ENCODE measurements at regions of chr5 and their contacts with region 1.

Region 1: GRCh38 chr5:169583424-169584204 is at the start of gene SPDL1:
- DNase-seq: peak; percentile 97
- ATAC-seq: peak; percentile 91
- H3K4me3 Mint-ChIP-seq: peak within 1 kb of the TSS; percentile 94
- H3K27ac Mint-ChIP-seq: peak within 1 kb of the TSS; percentile 96
- H3K4me1 Mint-ChIP-seq: peaks cover 25% of the 10 kb centered on the region
- H3K27me3 Mint-ChIP-seq: no peaks in the 10 kb centered on the region
- CTCF ChIP-seq: no peak
- total RNA-seq, gene SPDL1: 40.1 to 40.2 TPM

Region 2: DNA sequence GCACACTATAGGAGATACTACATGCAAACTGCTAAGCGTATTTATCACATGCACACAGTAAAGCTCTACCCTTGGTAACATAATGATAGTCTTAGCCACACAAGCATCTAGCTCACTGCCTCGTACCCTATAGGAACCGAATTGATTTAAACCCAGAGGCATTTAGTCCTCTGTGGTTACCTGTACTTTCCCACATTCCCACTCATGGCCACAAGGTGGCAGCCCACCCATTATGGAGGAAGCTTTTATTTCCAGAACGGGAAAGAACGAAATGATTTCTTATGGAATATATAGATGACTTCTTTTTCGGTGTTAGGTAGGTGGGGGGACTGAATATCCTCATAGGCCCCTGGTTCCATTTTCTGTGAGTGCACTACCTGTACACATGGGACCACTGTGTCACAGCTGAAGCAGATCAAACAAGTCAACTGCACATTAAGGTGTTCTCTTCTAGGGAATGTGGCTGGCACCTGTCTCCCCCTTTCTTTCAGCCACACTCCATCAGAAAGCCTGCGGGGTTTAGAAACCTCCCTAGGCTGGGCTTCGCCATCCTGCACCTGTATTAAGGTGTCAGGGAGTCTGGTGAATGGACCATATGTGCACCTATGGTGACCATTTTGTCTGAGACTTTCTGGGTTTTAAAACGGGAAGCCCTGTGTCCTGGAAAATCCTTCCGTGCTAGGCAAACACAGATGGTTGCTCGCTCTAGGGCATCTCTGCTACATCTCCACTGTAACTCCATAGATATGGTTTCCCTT is 595.9 kb before region 1 on chr5:
- CTCF ChIA-PET with region 1: interaction called, 24 read pairs
- POLR2A ChIA-PET with region 1: no interaction called
- intact Hi-C with region 1: loop called (anchors 5 kb)
- DNase-seq: peak; percentile 77
- ATAC-seq: peak; percentile 61
- H3K4me3 Mint-ChIP-seq: no peak overlapping the region
- H3K27ac Mint-ChIP-seq: no peak overlapping the region
- H3K4me1 Mint-ChIP-seq: no peaks in the 10 kb centered on the region
- H3K27me3 Mint-ChIP-seq: peaks cover 12% of the 10 kb centered on the region
- CTCF ChIP-seq: peak; percentile 82

Region 3: GRCh38 chr5:169467041-169467771 is 116.4 kb before region 1 on chr5:
- CTCF ChIA-PET with region 1: no interaction called
- POLR2A ChIA-PET with region 1: no interaction called
- intact Hi-C with region 1: no loop called
- DNase-seq: no peak
- ATAC-seq: no peak
- H3K4me3 Mint-ChIP-seq: no peak overlapping the region
- H3K27ac Mint-ChIP-seq: no peak overlapping the region
- H3K4me1 Mint-ChIP-seq: no peaks in the 10 kb centered on the region
- H3K27me3 Mint-ChIP-seq: peaks cover 1% of the 10 kb centered on the region
- CTCF ChIP-seq: no peak

Region 4: DNA sequence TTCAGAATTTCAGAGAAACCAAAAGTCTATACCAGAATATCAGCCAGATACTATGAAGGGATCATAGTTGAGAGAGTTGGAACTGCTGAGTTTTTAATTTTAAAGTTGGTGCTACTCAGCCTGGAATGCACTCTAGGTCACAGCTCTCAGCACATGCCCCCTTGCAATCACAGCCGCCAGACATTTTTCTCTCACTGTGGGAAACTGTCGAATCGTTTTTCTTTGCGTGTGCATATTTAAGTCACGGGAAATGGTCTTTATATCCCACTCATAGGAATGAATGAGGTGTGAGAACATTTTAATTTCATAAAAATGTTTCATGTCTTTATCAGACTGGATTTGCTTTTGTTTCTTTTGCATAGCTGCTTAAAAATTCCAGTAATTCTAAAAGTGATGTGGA is 12.3 kb before region 1 on chr5:
- CTCF ChIA-PET with region 1: interaction called, 11 read pairs
- POLR2A ChIA-PET with region 1: interaction called, 3 read pairs
- intact Hi-C with region 1: no loop called
- DNase-seq: no peak
- ATAC-seq: no peak
- H3K4me3 Mint-ChIP-seq: no peak overlapping the region
- H3K27ac Mint-ChIP-seq: no peak overlapping the region
- H3K4me1 Mint-ChIP-seq: no peaks in the 10 kb centered on the region
- H3K27me3 Mint-ChIP-seq: peaks cover 25% of the 10 kb centered on the region
- CTCF ChIP-seq: no peak

Region 5: DNA sequence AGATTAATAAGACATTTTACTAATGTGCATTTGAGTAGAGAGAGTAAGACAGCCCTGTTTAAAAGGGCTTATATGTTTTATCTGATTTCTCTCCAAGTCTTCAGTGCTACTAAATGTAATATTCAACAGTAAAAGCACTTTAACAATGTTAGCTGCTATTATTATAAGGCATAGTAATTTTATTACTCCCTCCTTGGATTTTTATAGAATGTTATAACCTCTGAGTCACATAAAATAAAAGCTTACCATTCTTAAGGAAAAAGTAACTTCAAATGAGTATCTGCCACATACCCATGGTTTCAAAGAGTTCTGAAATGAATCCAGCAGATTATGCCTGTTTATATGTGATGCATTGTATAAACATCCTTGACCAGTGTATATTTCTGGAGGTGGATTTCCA is 18.9 kb after region 1 on chr5:
- CTCF ChIA-PET with region 1: no interaction called
- POLR2A ChIA-PET with region 1: no interaction called
- intact Hi-C with region 1: no loop called
- DNase-seq: no peak
- ATAC-seq: no peak
- H3K4me3 Mint-ChIP-seq: no peak overlapping the region
- H3K27ac Mint-ChIP-seq: no peak overlapping the region
- H3K4me1 Mint-ChIP-seq: no peaks in the 10 kb centered on the region
- H3K27me3 Mint-ChIP-seq: no peaks in the 10 kb centered on the region
- CTCF ChIP-seq: no peak

Region 6: GRCh38 chr5:169637085-169637548 is 53.5 kb after region 1 on chr5 and contains the start of gene DOCK2:
- CTCF ChIA-PET with region 1: interaction called, 4 read pairs
- POLR2A ChIA-PET with region 1: interaction called, 22 read pairs
- intact Hi-C with region 1: no loop called
- DNase-seq: peak; percentile 85
- ATAC-seq: peak; percentile 82
- H3K4me3 Mint-ChIP-seq: peak within 1 kb of the TSS; percentile 82
- H3K27ac Mint-ChIP-seq: peak within 1 kb of the TSS; percentile 96
- H3K4me1 Mint-ChIP-seq: peaks cover 46% of the 10 kb centered on the region
- H3K27me3 Mint-ChIP-seq: no peaks in the 10 kb centered on the region
- CTCF ChIP-seq: no peak
- total RNA-seq, gene DOCK2: 180 to 181 TPM

Region 7: GRCh38 chr5:169650701-169651331 is 67.2 kb after region 1 on chr5:
- CTCF ChIA-PET with region 1: interaction called, 3 read pairs
- POLR2A ChIA-PET with region 1: interaction called, 6 read pairs
- intact Hi-C with region 1: loop called (anchors 2 kb)
- DNase-seq: peak; percentile 52
- ATAC-seq: peak; percentile 72
- H3K4me3 Mint-ChIP-seq: peak overlapping the region; percentile 42
- H3K27ac Mint-ChIP-seq: peak overlapping the region; percentile 85
- H3K4me1 Mint-ChIP-seq: peaks cover 96% of the 10 kb centered on the region
- H3K27me3 Mint-ChIP-seq: no peaks in the 10 kb centered on the region
- CTCF ChIP-seq: no peak

Measured in activated CD8-positive, alpha-beta T cell treated with anti-CD3 and anti-CD28 coated beads for 36 hours (primary cell).